Mammary epithelial cell (primary cell): ENCODE measurements at regions of chr2 and their contacts with region 1.

Region 1: GRCh38 chr2:217886720-217887309 is 116.0 kb downstream of the TNS1 start:
- DNase-seq: peak; percentile 52
- H3K4me3 ChIP-seq: no peak overlapping the region
- H3K27ac ChIP-seq: no peak overlapping the region
- H3K4me1 ChIP-seq: no peaks in the 10 kb centered on the region
- H3K27me3 ChIP-seq: no peaks in the 10 kb centered on the region
- CTCF ChIP-seq: peak; percentile 79 to 83

Region 2: GRCh38 chr2:217980036-217980435 is 93.2 kb after region 1 on chr2:
- CTCF ChIA-PET with region 1: no interaction called
- dilution Hi-C with region 1: loop called (anchors 5 kb)
- in situ Hi-C with region 1: loop called (anchors 10 kb)
- intact Hi-C with region 1: no loop called
- DNase-seq: no peak
- H3K4me3 ChIP-seq: no peak overlapping the region
- H3K27ac ChIP-seq: no peak overlapping the region
- H3K4me1 ChIP-seq: peaks cover 3% of the 10 kb centered on the region
- H3K27me3 ChIP-seq: peaks cover 10% of the 10 kb centered on the region
- CTCF ChIP-seq: no peak

Region 3: GRCh38 chr2:218033590-218034496 is 147.0 kb after region 1 on chr2:
- CTCF ChIA-PET with region 1: no interaction called
- dilution Hi-C with region 1: no loop called
- in situ Hi-C with region 1: no loop called
- intact Hi-C with region 1: loop called (anchors 2 kb)
- DNase-seq: no peak
- H3K4me3 ChIP-seq: no peak overlapping the region
- H3K27ac ChIP-seq: no peak overlapping the region
- H3K4me1 ChIP-seq: peaks cover 17% of the 10 kb centered on the region
- H3K27me3 ChIP-seq: no peaks in the 10 kb centered on the region
- CTCF ChIP-seq: no peak

Region 4: GRCh38 chr2:218074031-218074430 is 187.2 kb after region 1 on chr2:
- CTCF ChIA-PET with region 1: no interaction called
- dilution Hi-C with region 1: no loop called
- in situ Hi-C with region 1: no loop called
- intact Hi-C with region 1: loop called (anchors 2 kb)
- DNase-seq: no peak
- H3K4me3 ChIP-seq: no peak overlapping the region
- H3K27ac ChIP-seq: no peak overlapping the region
- H3K4me1 ChIP-seq: no peaks in the 10 kb centered on the region
- H3K27me3 ChIP-seq: no peaks in the 10 kb centered on the region
- CTCF ChIP-seq: no peak